ENCODE measurements at regions of chr1 and their contacts with region 1.

Region 1: GRCh38 chr1:101820071-101820470 is 176.7 kb downstream of the OLFM3 start:
- DNase-seq: peak; percentile 89
- H3K4me3 ChIP-seq: no peak overlapping the region
- H3K27ac ChIP-seq: peak overlapping the region; percentile 12
- H3K4me1 ChIP-seq: peaks cover 61% of the 10 kb centered on the region
- H3K27me3 ChIP-seq: no peaks in the 10 kb centered on the region
- CTCF ChIP-seq: peak; percentile 85

Region 2: GRCh38 chr1:101547357-101547756 is 272.7 kb before region 1 on chr1:
- CTCF ChIA-PET with region 1: no interaction called
- POLR2A ChIA-PET with region 1: no interaction called
- intact Hi-C with region 1: no loop called
- DNase-seq: no peak
- H3K4me3 ChIP-seq: no peak overlapping the region
- H3K27ac ChIP-seq: no peak overlapping the region
- H3K4me1 ChIP-seq: no peaks in the 10 kb centered on the region
- H3K27me3 ChIP-seq: no peaks in the 10 kb centered on the region
- CTCF ChIP-seq: no peak

Region 3: DNA sequence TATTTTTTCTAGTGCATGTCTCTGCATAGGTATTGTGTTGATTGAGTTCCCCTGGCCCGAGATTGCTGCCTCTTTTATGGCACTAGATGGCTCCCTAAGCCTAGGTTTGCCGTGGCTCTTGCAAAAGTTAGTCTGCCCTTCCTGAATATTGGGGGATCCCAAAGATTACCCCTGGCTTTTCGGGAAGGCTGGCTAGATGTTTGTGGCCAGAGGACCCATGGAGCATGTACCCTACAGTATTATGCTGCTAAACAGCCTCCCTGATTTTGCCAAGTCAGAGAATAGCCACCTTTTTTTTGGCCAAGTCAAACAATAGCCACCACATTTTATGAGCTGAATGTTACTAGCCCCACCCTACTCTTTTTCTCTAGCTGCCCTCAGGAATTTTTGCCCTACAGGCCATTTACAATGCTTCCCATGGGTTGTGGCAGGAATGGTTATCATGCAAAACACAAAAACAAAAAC is 166.6 kb before region 1 on chr1:
- CTCF ChIA-PET with region 1: no interaction called
- POLR2A ChIA-PET with region 1: no interaction called
- intact Hi-C with region 1: loop called (anchors 10 kb)
- DNase-seq: peak; percentile 78
- H3K4me3 ChIP-seq: no peak overlapping the region
- H3K27ac ChIP-seq: no peak overlapping the region
- H3K4me1 ChIP-seq: peaks cover 7% of the 10 kb centered on the region
- H3K27me3 ChIP-seq: no peaks in the 10 kb centered on the region
- CTCF ChIP-seq: peak; percentile 78

Region 4: GRCh38 chr1:101971304-101971703 is 151.2 kb after region 1 on chr1:
- CTCF ChIA-PET with region 1: interaction called, 4 read pairs
- POLR2A ChIA-PET with region 1: no interaction called
- intact Hi-C with region 1: loop called (anchors 5 kb)
- DNase-seq: peak; percentile 68
- H3K4me3 ChIP-seq: no peak overlapping the region
- H3K27ac ChIP-seq: peak overlapping the region; percentile 40
- H3K4me1 ChIP-seq: peaks cover 41% of the 10 kb centered on the region
- H3K27me3 ChIP-seq: no peaks in the 10 kb centered on the region
- CTCF ChIP-seq: peak; percentile 77

Region 5: GRCh38 chr1:102186536-102186935 is 366.5 kb after region 1 on chr1:
- CTCF ChIA-PET with region 1: interaction called, 6 read pairs
- POLR2A ChIA-PET with region 1: no interaction called
- intact Hi-C with region 1: loop called (anchors 1 kb)
- DNase-seq: peak; percentile 52
- H3K4me3 ChIP-seq: no peak overlapping the region
- H3K27ac ChIP-seq: peak overlapping the region; percentile 97
- H3K4me1 ChIP-seq: peaks cover 77% of the 10 kb centered on the region
- H3K27me3 ChIP-seq: no peaks in the 10 kb centered on the region
- CTCF ChIP-seq: no peak

Region 6: DNA sequence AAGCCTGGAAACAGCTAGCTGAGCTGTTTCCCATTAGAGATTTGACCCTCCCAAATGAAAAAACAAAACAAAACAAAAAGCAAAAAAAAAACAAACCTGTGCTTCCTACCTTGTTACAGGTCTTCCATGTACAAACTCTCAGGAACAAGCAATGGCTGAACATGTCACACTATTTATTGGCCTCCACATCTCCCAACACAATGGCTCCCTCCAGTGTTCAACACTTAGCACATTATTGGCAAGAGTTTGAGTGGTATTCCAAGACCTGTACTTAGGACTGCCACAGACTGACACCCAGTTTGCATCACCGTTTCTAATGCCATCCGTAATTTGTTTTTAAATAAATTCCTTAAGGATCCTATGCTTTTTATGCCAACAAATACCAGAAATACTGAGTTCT is 371.7 kb after region 1 on chr1:
- CTCF ChIA-PET with region 1: interaction called, 6 read pairs
- POLR2A ChIA-PET with region 1: no interaction called
- intact Hi-C with region 1: loop called (anchors 1 kb)
- DNase-seq: peak; percentile 88
- H3K4me3 ChIP-seq: no peak overlapping the region
- H3K27ac ChIP-seq: no peak overlapping the region
- H3K4me1 ChIP-seq: peaks cover 29% of the 10 kb centered on the region
- H3K27me3 ChIP-seq: no peaks in the 10 kb centered on the region
- CTCF ChIP-seq: peak; percentile 78

Region 7: DNA sequence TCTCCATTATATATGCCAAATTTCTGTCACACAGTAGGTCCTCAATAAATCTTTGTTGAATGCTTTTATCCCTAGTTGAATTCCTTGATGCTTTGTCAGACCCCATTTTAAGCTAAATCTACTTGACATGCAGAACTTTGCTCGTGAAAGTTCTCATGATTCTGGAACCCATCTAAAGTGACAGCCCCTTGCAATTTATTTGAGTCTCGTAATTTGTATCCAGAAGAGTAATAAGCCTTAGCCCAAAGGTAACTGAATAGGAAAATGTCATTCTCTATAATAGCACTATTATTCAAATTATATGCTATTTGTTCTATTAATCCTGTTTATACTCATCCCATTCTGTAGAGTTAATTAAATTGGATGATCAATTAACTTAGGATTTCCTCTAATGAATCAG is 643.3 kb after region 1 on chr1:
- CTCF ChIA-PET with region 1: no interaction called
- POLR2A ChIA-PET with region 1: interaction called, 19 read pairs
- intact Hi-C with region 1: no loop called
- DNase-seq: peak; percentile 37
- H3K4me3 ChIP-seq: no peak overlapping the region
- H3K27ac ChIP-seq: no peak overlapping the region
- H3K4me1 ChIP-seq: peaks cover 5% of the 10 kb centered on the region
- H3K27me3 ChIP-seq: no peaks in the 10 kb centered on the region
- CTCF ChIP-seq: no peak